ENCODE measurements at regions of chr12 and their contacts with region 1.

Region 1: GRCh38 chr12:103877934-103878510 is 37.0 kb upstream of the NT5DC3 start:
- DNase-seq: peak; percentile 53
- H3K4me3 Mint-ChIP-seq: no peak overlapping the region
- H3K27ac Mint-ChIP-seq: no peak overlapping the region
- H3K4me1 Mint-ChIP-seq: peaks cover 36% of the 10 kb centered on the region
- H3K27me3 Mint-ChIP-seq: peaks cover 10% of the 10 kb centered on the region

Region 2: DNA sequence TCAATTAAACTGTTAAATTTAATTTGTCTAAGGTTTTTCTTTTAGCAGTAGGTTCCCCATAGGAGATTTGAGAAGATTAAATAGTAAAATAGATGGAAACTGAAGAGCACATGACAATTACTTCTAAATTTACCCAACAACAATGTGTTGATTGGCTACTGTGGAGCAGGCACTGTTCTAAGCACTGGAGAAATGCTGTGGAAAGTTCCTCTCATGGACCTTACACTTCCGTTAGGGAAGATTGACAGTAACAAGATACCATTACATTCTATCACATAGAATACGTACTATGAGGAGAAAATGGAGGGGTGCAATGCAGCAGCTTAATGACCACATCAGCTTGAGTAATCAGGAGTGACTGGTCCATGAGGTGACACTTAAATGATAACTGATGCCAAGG is 299.1 kb before region 1 on chr12:
- intact Hi-C with region 1: loop called (anchors 5 kb)
- DNase-seq: no peak
- H3K4me3 Mint-ChIP-seq: no peak overlapping the region
- H3K27ac Mint-ChIP-seq: no peak overlapping the region
- H3K4me1 Mint-ChIP-seq: peaks cover 9% of the 10 kb centered on the region
- H3K27me3 Mint-ChIP-seq: peaks cover 19% of the 10 kb centered on the region

Region 3: GRCh38 chr12:103924761-103925641 is 47.0 kb after region 1 on chr12:
- intact Hi-C with region 1: loop called (anchors 1 kb)
- DNase-seq: peak; percentile 51
- H3K4me3 Mint-ChIP-seq: peak overlapping the region; percentile 70
- H3K27ac Mint-ChIP-seq: peak overlapping the region; percentile 81
- H3K4me1 Mint-ChIP-seq: peaks cover 50% of the 10 kb centered on the region
- H3K27me3 Mint-ChIP-seq: peaks cover 2% of the 10 kb centered on the region

Region 4: DNA sequence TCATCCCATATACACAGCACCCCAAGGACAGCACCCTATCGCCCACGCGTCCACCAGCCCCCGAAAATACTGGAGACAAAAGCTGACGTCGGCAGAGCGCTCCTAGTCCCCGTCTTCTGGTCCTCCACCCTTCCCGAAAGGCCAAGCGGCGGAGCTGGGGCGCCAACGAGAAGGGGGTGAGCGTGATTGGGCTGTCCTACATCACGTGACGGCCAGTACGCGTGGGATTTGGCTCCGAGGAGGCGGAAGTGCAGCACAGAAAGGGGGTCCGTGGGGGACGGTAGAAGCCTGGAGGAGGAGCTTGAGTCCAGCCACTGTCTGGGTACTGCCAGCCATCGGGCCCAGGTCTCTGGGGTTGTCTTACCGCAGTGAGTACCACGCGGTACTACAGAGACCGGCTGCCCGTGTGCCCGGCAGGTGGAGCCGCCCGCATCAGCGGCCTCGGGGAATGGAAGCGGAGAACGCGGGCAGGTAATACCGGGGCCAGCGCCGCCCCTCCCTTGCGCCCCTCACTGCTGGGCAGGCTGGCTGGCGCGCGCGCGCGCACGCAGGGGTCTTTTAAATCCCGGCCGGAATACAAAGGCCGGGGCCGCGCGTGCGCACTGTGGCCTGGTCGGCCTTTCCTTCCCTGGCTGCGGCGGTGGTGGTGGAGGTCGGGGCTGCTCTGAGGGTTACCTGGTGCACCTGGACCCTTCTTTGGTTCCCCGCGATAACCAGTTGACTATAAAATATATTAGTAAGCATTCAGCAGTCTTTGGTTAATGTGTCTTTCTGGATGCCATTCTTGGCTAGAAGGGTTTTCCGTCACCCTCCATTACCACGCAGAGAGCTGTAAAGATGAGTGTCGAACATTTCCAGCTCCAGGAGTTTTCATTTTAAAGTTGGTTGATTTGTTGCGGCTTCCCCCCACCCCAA is 87.8 kb after region 1 on chr12 and contains the start of gene TDG:
- intact Hi-C with region 1: loop called (anchors 2 kb)
- DNase-seq: peak; percentile 95
- H3K4me3 Mint-ChIP-seq: peak within 1 kb of the TSS; percentile 98
- H3K27ac Mint-ChIP-seq: peak within 1 kb of the TSS; percentile 99
- H3K4me1 Mint-ChIP-seq: peaks cover 47% of the 10 kb centered on the region
- H3K27me3 Mint-ChIP-seq: no peaks in the 10 kb centered on the region
- total RNA-seq, gene TDG: 80.4 and 81.6 TPM in 2 replicates

Region 5: GRCh38 chr12:104108755-104109445 is 230.9 kb after region 1 on chr12:
- intact Hi-C with region 1: loop called (anchors 1 kb)
- DNase-seq: peak; percentile 70
- H3K4me3 Mint-ChIP-seq: no peak overlapping the region
- H3K27ac Mint-ChIP-seq: no peak overlapping the region
- H3K4me1 Mint-ChIP-seq: peaks cover 11% of the 10 kb centered on the region
- H3K27me3 Mint-ChIP-seq: no peaks in the 10 kb centered on the region

Measured in activated T-helper 1 cell treated with anti-CD3 and anti-CD28 coated beads, Interleukin-12 subunit alpha, Interleukin-12 subunit beta, Interleukin-2, Interleukin-4 antibody, amounts not matched to agents 30 ng/mL and 10 ng/mL and 1 ng/mL, durations not matched to agents 14 hours and 24 hours and 36 hours (primary cell).